MCF 10A (cell line): ENCODE measurements at regions of chr9 and their contacts with region 1.

Region 1: GRCh38 chr9:113591001-113591898 is 127.7 kb downstream of the RGS3 start:
- DNase-seq: peak; percentile 72
- H3K4me3 Mint-ChIP-seq: no peak overlapping the region
- H3K27ac Mint-ChIP-seq: no peak overlapping the region
- H3K4me1 Mint-ChIP-seq: no peaks in the 10 kb centered on the region
- H3K27me3 Mint-ChIP-seq: no peaks in the 10 kb centered on the region
- CTCF ChIP-seq: peak; percentile 84

Region 2: DNA sequence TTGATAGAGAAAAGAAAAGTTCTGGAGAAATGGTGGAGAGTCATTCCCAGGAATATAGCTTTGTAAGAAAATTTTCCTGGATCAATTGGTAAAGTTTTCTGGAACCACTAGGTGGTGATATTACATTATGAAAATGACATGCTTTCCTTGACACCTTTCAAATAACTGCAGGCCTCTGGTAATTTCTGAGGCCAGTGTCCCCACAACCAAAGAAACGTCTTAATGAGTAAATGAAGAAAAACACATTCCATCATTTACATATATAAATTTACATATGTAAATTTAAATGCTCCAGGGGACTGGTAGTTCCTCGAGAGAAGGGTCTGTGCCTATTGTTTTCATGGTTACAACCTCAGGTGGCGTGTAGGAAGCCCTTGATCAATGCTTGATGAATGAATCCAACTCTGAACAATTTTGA is 144.9 kb before region 1 on chr9:
- CTCF ChIA-PET with region 1: interaction called, 48 read pairs
- POLR2A ChIA-PET with region 1: interaction called, 6 read pairs
- intact Hi-C with region 1: loop called (anchors 2 kb)
- DNase-seq: peak; percentile 51
- H3K4me3 Mint-ChIP-seq: no peak overlapping the region
- H3K27ac Mint-ChIP-seq: no peak overlapping the region
- H3K4me1 Mint-ChIP-seq: no peaks in the 10 kb centered on the region
- H3K27me3 Mint-ChIP-seq: no peaks in the 10 kb centered on the region
- CTCF ChIP-seq: peak; percentile 66

Region 3: DNA sequence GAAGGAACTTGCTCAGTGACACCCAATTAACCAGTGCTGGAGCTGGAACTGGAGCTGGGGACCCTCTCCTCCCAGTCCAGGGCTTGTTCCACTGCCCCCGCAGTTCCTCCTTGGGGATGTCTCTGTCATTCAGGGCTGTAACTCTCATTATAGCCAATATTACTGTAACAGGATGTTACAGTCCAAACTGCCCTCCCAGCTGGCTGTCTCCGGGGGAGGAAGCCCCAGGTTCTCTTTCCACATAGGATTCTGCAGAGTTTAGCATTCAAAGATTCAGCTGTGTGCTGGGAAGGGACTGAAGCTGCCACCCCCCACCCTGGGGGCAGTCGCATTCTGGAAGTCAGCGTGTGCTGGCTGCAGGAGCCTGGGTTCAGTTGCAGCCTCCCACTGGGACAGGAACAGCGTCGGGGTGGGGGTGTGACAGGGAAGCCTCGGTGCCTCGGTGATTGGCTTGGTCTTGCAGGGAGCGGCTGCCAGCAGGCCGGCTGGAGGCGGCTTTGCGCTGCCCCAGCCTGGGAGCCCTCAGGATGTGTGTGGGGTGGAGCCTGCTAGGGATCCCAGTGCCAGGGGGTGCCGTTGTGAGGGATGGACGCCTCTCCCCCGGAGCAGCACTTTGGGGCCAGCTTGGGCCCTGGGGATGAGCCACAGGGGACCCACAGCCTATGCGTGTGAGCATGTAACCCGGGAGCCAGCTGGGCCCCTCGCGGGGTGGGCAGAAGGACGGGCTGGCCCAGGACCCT is 26.6 kb before region 1 on chr9:
- CTCF ChIA-PET with region 1: interaction called, 20 read pairs
- POLR2A ChIA-PET with region 1: interaction called, 8 read pairs
- intact Hi-C with region 1: loop called (anchors 1 kb)
- DNase-seq: peak; percentile 84
- H3K4me3 Mint-ChIP-seq: peak overlapping the region; percentile 73
- H3K27ac Mint-ChIP-seq: peak overlapping the region; percentile 75
- H3K4me1 Mint-ChIP-seq: peaks cover 24% of the 10 kb centered on the region
- H3K27me3 Mint-ChIP-seq: no peaks in the 10 kb centered on the region
- CTCF ChIP-seq: no peak

Region 4: GRCh38 chr9:113578882-113579282 is 12.4 kb before region 1 on chr9:
- CTCF ChIA-PET with region 1: interaction called, 55 read pairs
- POLR2A ChIA-PET with region 1: interaction called, 6 read pairs
- intact Hi-C with region 1: no loop called
- DNase-seq: peak; percentile 94
- H3K4me3 Mint-ChIP-seq: no peak overlapping the region
- H3K27ac Mint-ChIP-seq: peak overlapping the region; percentile 92
- H3K4me1 Mint-ChIP-seq: peaks cover 62% of the 10 kb centered on the region
- H3K27me3 Mint-ChIP-seq: no peaks in the 10 kb centered on the region
- CTCF ChIP-seq: no peak

Region 5: GRCh38 chr9:113602126-113603044 is 11.1 kb after region 1 on chr9:
- CTCF ChIA-PET with region 1: interaction called, 10 read pairs
- POLR2A ChIA-PET with region 1: no interaction called
- intact Hi-C with region 1: no loop called
- DNase-seq: peak; percentile 88
- H3K4me3 Mint-ChIP-seq: no peak overlapping the region
- H3K27ac Mint-ChIP-seq: peak overlapping the region; percentile 16
- H3K4me1 Mint-ChIP-seq: peaks cover 16% of the 10 kb centered on the region
- H3K27me3 Mint-ChIP-seq: no peaks in the 10 kb centered on the region
- CTCF ChIP-seq: no peak